ENCODE measurements at regions of chr2 and their contacts with region 1.

Region 1: DNA sequence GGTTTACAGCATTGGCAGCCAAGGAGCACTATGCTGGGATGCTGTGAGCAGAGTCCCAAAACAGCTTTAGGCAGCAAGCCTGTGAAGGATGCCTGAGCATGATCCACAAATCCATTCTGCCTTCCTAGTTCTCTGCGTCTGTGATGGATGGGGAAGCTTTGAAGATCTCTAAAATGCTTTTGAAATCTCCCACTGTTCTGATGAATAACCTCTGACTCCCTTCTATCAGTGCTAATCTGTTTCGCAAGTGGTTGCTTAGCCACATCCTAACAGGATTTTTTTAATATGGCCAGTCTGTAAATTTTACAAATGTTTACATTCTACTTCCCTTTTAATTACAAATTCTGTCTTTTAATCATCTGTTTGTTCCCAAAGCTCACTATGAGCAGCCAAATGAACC is 319.2 kb downstream of the GULP1 start:
- DNase-seq: no peak
- H3K4me3 ChIP-seq: no peak overlapping the region
- H3K27ac ChIP-seq: no peak overlapping the region
- H3K27me3 ChIP-seq: no peaks in the 10 kb centered on the region
- CTCF ChIP-seq: no peak

Region 2: DNA sequence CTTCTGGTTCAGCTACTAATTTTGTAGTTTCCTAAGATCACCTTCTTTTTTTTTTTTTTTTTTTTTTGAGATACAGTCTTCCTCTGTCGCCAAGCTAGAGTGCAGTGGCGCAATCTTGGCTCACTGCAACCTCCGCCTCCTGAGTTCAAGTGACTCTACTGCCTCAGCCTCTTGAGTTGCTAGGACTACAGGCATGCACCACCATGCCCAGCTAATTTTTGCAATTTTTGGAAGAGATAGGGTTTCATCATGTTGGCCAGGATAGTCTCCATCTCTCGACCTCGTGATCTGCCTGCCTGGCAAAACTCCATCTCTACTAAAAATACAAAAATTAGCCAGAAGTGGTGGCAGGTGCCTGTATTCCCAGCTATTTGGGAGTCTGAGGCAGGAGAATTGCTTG is 755.1 kb before region 1 on chr2:
- CTCF ChIA-PET with region 1: interaction called, 12 read pairs
- POLR2A ChIA-PET with region 1: no interaction called
- DNase-seq: no peak
- H3K4me3 ChIP-seq: no peak overlapping the region
- H3K27ac ChIP-seq: no peak overlapping the region
- H3K27me3 ChIP-seq: no peaks in the 10 kb centered on the region
- CTCF ChIP-seq: no peak